Caco-2 (cell line): ENCODE measurements at regions of chr9 and their contacts with region 1.

Region 1: DNA sequence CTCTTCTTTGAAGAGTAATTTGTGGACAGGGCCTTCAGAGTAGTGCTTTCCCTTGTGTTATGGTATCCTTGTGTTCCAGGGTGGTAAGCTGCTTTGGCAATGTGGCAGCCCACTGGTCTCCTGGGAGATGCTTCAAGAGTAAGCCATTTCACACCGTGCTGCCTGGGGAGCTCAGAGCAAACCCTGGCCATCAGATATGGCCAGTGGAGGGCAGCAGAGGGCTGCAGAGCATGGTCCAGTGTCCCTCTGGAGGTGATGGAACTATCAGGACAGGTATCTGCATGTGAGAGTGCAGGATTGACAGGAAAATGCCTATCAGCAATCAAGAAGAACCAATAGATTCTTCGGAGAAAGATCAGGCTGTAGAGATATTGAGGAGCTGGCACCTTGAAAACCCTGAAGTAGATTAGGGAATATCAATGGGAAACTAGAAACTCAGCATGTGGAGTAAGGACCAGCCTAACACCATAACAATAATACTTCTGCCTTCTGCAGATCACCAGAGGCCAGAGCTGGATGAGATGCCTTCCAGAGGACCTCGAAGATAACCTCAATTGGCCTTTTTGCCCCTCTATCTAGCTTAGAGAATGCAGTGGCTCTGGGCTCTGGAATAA is 90.8 kb downstream of the PLPPR1 start:
- DNase-seq: peak; percentile 71 to 79
- H3K4me3 ChIP-seq: no peak overlapping the region
- H3K4me3 Mint-ChIP-seq: no peak overlapping the region
- H3K27ac Mint-ChIP-seq: no peak overlapping the region
- H3K4me1 ChIP-seq: no peaks in the 10 kb centered on the region
- H3K4me1 Mint-ChIP-seq: no peaks in the 10 kb centered on the region
- H3K27me3 ChIP-seq: no peaks in the 10 kb centered on the region
- H3K27me3 Mint-ChIP-seq: no peaks in the 10 kb centered on the region
- CTCF ChIP-seq: peak; percentile 81 to 92

Region 2: GRCh38 chr9:100714372-100715099 is 404.8 kb before region 1 on chr9:
- CTCF ChIA-PET with region 1: no interaction called
- POLR2A ChIA-PET with region 1: no interaction called
- intact Hi-C with region 1: loop called (anchors 5 kb)
- DNase-seq: peak; percentile 57 to 73
- H3K4me3 ChIP-seq: no peak overlapping the region
- H3K4me3 Mint-ChIP-seq: no peak overlapping the region
- H3K27ac Mint-ChIP-seq: no peak overlapping the region
- H3K4me1 ChIP-seq: no peaks in the 10 kb centered on the region
- H3K4me1 Mint-ChIP-seq: no peaks in the 10 kb centered on the region
- H3K27me3 ChIP-seq: no peaks in the 10 kb centered on the region; the same call in 1 of the 2 replicates
- H3K27me3 Mint-ChIP-seq: no peaks in the 10 kb centered on the region
- CTCF ChIP-seq: peak; percentile 74 to 80

Region 3: DNA sequence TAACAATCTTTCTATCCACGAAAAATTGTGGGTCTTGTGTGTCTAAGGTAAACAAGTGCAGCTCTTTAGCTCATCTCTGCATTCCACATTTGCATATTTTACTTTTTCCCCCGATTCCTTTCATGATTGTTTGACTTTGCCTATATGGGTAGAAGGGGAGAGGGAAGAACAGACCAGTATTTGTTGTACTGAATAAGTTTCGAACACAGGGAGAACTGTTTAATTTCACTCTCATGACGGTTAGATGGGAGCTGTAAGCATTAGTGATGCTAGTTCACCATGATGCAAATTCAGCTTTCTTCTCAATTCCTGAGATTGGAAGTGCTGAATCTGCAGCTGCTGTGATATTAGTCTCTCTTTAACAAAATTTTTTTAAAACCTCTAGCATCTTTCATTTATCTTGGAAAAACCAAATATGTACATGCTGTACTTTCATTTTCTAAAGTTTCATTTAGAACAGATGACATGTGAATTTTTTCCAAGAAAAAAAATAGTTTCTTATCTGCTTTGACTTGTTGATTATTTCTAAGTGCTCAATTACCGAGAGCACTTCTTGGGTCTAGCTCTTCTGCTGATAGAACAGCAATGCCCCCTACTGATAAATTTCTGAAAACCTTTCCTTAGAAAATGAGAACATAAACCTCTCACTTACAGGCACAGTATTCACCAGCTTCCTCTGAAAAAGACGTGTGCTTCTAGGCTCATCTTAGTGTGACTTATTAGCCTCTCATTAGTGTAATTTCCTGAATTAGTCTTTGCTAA is 116.0 kb after region 1 on chr9:
- CTCF ChIA-PET with region 1: interaction called, 16 read pairs
- POLR2A ChIA-PET with region 1: no interaction called
- intact Hi-C with region 1: loop called (anchors 1 kb)
- DNase-seq: peak in 1 of 2 experiments; percentile 16
- H3K4me3 ChIP-seq: no peak overlapping the region
- H3K4me3 Mint-ChIP-seq: no peak overlapping the region
- H3K27ac Mint-ChIP-seq: no peak overlapping the region
- H3K4me1 ChIP-seq: no peaks in the 10 kb centered on the region
- H3K4me1 Mint-ChIP-seq: no peaks in the 10 kb centered on the region
- H3K27me3 ChIP-seq: no peaks in the 10 kb centered on the region
- H3K27me3 Mint-ChIP-seq: peaks cover 5% of the 10 kb centered on the region
- CTCF ChIP-seq: peak; percentile 48 to 56

Region 4: GRCh38 chr9:101387871-101388506 is 268.7 kb after region 1 on chr9:
- CTCF ChIA-PET with region 1: interaction called, 3 read pairs
- POLR2A ChIA-PET with region 1: no interaction called
- intact Hi-C with region 1: loop called (anchors 1 kb)
- DNase-seq: peak; percentile 36 to 46
- H3K4me3 ChIP-seq: no peak overlapping the region
- H3K4me3 Mint-ChIP-seq: no peak overlapping the region
- H3K27ac Mint-ChIP-seq: no peak overlapping the region
- H3K4me1 ChIP-seq: 0 out of 2 replicates have a peak, but pooled peaks cover 3% of the 10 kb centered on the region
- H3K4me1 Mint-ChIP-seq: peaks cover 13% of the 10 kb centered on the region
- H3K27me3 ChIP-seq: no peaks in the 10 kb centered on the region
- H3K27me3 Mint-ChIP-seq: no peaks in the 10 kb centered on the region
- CTCF ChIP-seq: peak; percentile 43 to 46

Region 5: GRCh38 chr9:101530077-101530711 is 410.9 kb after region 1 on chr9:
- CTCF ChIA-PET with region 1: interaction called, 4 read pairs
- POLR2A ChIA-PET with region 1: no interaction called
- intact Hi-C with region 1: loop called (anchors 1 kb)
- DNase-seq: peak; percentile 71 to 81
- H3K4me3 ChIP-seq: no peak overlapping the region
- H3K4me3 Mint-ChIP-seq: no peak overlapping the region
- H3K27ac Mint-ChIP-seq: no peak overlapping the region
- H3K4me1 ChIP-seq: no peaks in the 10 kb centered on the region
- H3K4me1 Mint-ChIP-seq: no peaks in the 10 kb centered on the region
- H3K27me3 ChIP-seq: no peaks in the 10 kb centered on the region
- H3K27me3 Mint-ChIP-seq: no peaks in the 10 kb centered on the region
- CTCF ChIP-seq: peak; percentile 80 to 82